ENCODE measurements at regions of chr17 and their contacts with region 1.

Region 1: GRCh38 chr17:18260332-18261144 is at the start of gene MIEF2:
- DNase-seq: peak; percentile 91
- H3K4me3 Mint-ChIP-seq: peak within 1 kb of the TSS; percentile 82
- H3K27ac Mint-ChIP-seq: peak within 1 kb of the TSS; percentile 76
- H3K4me1 Mint-ChIP-seq: peaks cover 31% of the 10 kb centered on the region
- H3K27me3 Mint-ChIP-seq: no peaks in the 10 kb centered on the region
- total RNA-seq, gene MIEF2: 5.8 and 7.0 TPM in 2 replicates

Region 2: GRCh38 chr17:18087610-18088491 is 172.7 kb before region 1 on chr17 and contains the start of gene DRG2:
- intact Hi-C with region 1: loop called (anchors 1 kb)
- DNase-seq: peak; percentile 84
- H3K4me3 Mint-ChIP-seq: peak within 1 kb of the TSS; percentile 95
- H3K27ac Mint-ChIP-seq: peak within 1 kb of the TSS; percentile 96
- H3K4me1 Mint-ChIP-seq: peaks cover 17% of the 10 kb centered on the region
- H3K27me3 Mint-ChIP-seq: no peaks in the 10 kb centered on the region
- total RNA-seq, gene DRG2: 67.5 and 69.2 TPM in 2 replicates

Region 3: GRCh38 chr17:18231164-18231563 is 29.4 kb before region 1 on chr17:
- intact Hi-C with region 1: no loop called
- DNase-seq: no peak
- H3K4me3 Mint-ChIP-seq: no peak overlapping the region
- H3K27ac Mint-ChIP-seq: no peak overlapping the region
- H3K4me1 Mint-ChIP-seq: peaks cover 16% of the 10 kb centered on the region
- H3K27me3 Mint-ChIP-seq: peaks cover 2% of the 10 kb centered on the region

Region 4: DNA sequence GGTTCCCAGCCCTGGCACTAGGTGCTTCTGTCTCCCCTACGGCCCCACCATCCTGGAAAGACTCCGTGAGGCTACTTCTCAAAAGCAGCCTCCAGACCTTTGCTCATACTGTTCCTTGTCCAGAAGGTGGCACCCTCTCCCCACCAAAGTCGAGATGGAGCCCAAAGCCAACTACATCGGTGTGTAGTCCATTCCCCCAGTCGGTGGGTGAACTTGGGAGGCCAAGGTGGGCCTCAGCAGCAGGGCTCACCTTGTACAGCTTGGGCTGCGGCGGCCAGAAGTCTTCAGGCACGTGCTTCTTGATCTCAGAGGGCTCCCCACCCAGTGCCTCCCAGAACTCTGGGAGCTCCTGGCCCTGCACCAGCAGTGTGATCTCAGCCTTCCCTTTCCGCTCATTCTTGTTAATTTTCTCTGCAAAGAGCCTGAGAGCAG is 12.2 kb before region 1 on chr17:
- intact Hi-C with region 1: loop called (anchors 1 kb)
- DNase-seq: peak; percentile 52
- H3K4me3 Mint-ChIP-seq: no peak overlapping the region
- H3K27ac Mint-ChIP-seq: peak overlapping the region; percentile 64
- H3K4me1 Mint-ChIP-seq: peaks cover 4% of the 10 kb centered on the region
- H3K27me3 Mint-ChIP-seq: no peaks in the 10 kb centered on the region

Region 5: DNA sequence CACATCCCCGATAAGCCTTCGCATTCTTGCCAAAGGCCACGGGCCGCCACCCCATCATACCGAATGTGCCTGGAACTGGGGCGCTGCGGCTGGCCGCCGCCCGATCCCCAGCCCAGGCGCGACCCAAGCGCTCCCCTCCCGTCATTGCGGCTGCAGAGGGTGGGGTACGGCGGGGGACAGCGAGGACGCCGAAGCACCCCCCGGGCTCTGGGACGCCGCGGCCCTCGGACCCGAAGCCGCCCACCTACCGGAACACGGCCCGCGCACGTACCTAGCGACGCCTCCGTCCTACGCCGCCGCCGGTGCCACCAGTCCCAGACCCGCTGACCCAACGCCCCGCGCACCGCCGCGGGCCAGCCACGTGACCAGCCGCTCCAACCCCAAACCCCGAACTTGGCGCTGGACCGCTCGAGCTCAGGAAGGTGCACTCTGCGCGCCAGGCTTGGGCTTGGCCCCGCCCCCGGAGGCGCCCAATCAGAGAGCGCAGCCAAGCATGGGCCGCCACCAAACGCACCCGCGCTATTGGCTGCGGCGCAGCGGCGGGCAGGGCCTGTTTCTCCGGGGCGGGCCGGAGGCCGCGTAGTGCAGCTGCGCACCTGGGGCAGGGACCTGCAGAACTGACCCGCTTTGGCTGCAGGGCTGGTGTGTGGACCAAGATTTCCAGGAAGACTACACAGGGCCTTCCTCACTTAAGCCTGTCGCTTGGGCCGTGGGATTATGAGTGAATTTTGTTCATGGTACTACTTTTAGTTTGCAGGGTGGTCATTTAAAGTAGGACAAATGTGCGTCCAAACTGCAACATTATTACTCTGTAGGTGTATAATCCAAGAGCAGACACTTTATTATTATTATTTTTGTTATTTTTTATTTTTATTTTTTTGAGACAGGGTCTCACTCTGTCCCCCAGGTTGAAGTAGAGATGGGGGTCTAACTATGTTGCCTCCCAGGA is 102.8 kb after region 1 on chr17 and contains the start of gene SHMT1:
- intact Hi-C with region 1: loop called (anchors 2 kb)
- DNase-seq: peak; percentile 93
- H3K4me3 Mint-ChIP-seq: peak within 1 kb of the TSS; percentile 93
- H3K27ac Mint-ChIP-seq: peak within 1 kb of the TSS; percentile 88
- H3K4me1 Mint-ChIP-seq: peaks cover 9% of the 10 kb centered on the region
- H3K27me3 Mint-ChIP-seq: no peaks in the 10 kb centered on the region
- total RNA-seq, gene SHMT1: 51.5 and 56.2 TPM in 2 replicates

Region 6: GRCh38 chr17:18377437-18378204 is 117.1 kb after region 1 on chr17 and contains the start of gene EVPLL:
- intact Hi-C with region 1: no loop called
- DNase-seq: no peak
- H3K4me3 Mint-ChIP-seq: no peak within 1 kb of the TSS
- H3K27ac Mint-ChIP-seq: no peak within 1 kb of the TSS
- H3K4me1 Mint-ChIP-seq: no peaks in the 10 kb centered on the region
- H3K27me3 Mint-ChIP-seq: peaks cover 10% of the 10 kb centered on the region
- total RNA-seq, gene EVPLL: 0.17 TPM in 1 of 2 replicates, not detected in the other